Dorsolateral prefrontal cortex (tissue), 120 donors: ENCODE measurements at regions of chr6 and their contacts with region 1.

Region 1: DNA sequence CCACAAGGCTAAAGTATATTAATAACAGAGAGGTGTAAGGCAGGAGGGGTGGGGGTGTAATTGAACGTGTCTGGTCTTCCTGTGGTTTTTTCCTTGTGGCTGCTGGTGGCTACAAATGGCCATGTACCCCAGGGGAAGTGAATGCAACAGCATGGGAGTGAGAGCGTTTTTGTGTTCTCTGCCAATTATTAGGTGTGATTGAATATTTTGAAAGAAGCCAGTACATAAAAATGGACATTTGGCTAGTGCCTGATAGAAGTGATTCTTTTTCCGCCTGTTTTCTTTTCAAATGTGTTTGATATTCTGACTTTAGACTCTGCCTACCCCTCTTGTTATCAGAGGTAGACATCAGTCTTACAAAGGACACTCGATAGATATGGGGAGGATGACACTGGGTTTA is 141.3 kb downstream of the PRL start:
- DNase-seq: no peak
- H3K4me3 ChIP-seq: no peak overlapping the region
- H3K27ac ChIP-seq: no peak overlapping the region
- H3K27me3 ChIP-seq: no peaks in the 10 kb centered on the region
- CTCF ChIP-seq: no peak

Region 2: GRCh38 chr6:22113026-22113766 is 42.4 kb before region 1 on chr6:
- intact Hi-C with region 1: no loop called
- DNase-seq: no peak
- H3K4me3 ChIP-seq: no peak overlapping the region
- H3K27ac ChIP-seq: no peak overlapping the region
- H3K27me3 ChIP-seq: no peaks in the 10 kb centered on the region
- CTCF ChIP-seq: no peak

Region 3: GRCh38 chr6:22208026-22208425 is 52.5 kb after region 1 on chr6:
- intact Hi-C with region 1: loop called in 1 of 2 experiments (anchors 2 kb)
- DNase-seq: no peak
- H3K4me3 ChIP-seq: no peak overlapping the region
- H3K27ac ChIP-seq: no peak overlapping the region
- H3K27me3 ChIP-seq: no peaks in the 10 kb centered on the region
- CTCF ChIP-seq: no peak

Region 4: DNA sequence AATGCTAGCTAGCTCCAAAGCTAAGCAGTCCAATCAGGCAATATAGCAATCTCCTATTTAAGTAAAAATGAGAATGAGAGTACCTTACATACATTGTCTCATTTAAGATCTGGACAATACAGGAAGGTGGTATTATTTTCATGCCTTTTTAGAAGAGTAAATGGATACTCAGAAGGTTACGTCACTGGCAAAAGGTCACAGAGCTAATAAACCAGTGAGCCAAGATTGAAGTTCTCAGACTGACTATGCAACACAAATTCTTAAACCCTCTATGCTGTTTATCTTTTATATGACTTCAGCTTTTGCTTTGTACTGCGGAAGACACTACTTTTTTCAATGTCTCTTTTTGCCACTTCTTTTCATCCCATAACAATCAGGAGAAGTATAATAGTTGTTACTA is 276.5 kb after region 1 on chr6:
- intact Hi-C with region 1: no loop called
- DNase-seq: no peak
- H3K4me3 ChIP-seq: no peak overlapping the region
- H3K27ac ChIP-seq: no peak overlapping the region
- H3K27me3 ChIP-seq: no peaks in the 10 kb centered on the region
- CTCF ChIP-seq: no peak